ENCODE measurements at regions of chr2 and their contacts with region 1.

Region 1: GRCh38 chr2:120312861-120313694 is 32.9 kb upstream of the INHBB start:
- DNase-seq: peak; percentile 31 to 86
- H3K4me3 ChIP-seq: peak overlapping the region in 3 of 4 experiments; percentile 11 to 51 (median 25); a peak in 4 of 8 replicates
- H3K27ac ChIP-seq: no peak overlapping the region
- H3K4me1 ChIP-seq: peaks cover 1 to 3% (median 2%) of the 10 kb centered on the region in 4 experiments; a peak in 5 of 7 replicates
- H3K27me3 ChIP-seq: peaks cover 4 to 55% (median 40%) of the 10 kb centered on the region in 4 experiments
- CTCF ChIP-seq: peak; percentile 85 to 93 (median 87)
- EP300 ChIP-seq: no peak
- POLR2A ChIP-seq: no peak
- RAD21 ChIP-seq: peak; percentile 85 to 87

Region 2: DNA sequence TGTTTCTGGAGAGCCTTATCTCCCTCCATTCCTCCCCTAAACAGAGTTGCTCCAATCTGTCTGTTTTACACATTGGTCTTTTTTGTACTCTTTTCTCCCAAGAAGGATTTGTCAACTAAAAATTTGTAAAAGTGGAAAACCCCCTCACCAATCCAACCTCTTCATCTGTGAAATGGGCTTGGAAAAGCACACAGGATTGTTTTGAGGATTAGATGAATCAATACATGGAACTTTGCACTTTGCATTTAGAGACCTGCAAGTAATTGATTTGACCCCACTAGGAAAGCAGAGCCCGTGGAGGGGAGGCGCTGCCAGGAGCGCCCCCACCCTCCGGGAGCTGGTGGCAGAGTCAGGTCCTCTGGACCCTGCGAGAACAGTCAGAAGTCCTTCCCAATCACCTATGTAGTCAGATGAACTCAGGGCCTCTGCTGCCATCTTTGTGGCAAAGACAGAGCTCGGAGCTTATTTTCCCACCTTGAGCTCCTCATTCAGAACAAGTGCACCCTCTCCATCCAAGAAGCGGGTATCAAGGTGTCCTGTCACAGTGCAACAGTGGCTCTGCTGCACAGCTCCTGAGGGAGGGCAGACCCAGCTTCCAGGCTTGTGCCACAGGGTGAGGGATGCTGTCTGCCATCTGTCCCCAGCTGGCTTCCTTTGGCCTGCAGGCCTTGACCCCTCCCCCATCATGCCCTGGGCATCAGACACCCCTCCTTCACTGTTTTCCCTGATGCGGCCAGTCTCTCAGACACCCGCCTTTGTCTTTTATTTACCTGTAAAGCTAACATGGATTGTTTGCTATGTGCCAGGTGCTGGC is 88.1 kb before region 1 on chr2:
- CTCF ChIA-PET with region 1: interaction called, 12 read pairs
- POLR2A ChIA-PET with region 1: no interaction called
- DNase-seq: no peak
- H3K4me3 ChIP-seq: no peak overlapping the region
- H3K27ac ChIP-seq: no peak overlapping the region
- H3K4me1 ChIP-seq: peaks cover 0 to 7% (median 6%) of the 10 kb centered on the region in 4 experiments; a peak in 5 of 7 replicates
- H3K27me3 ChIP-seq: peaks cover 13 to 45% (median 29%) of the 10 kb centered on the region in 4 experiments
- CTCF ChIP-seq: no peak
- EP300 ChIP-seq: no peak
- POLR2A ChIP-seq: no peak
- RAD21 ChIP-seq: no peak

Region 3: DNA sequence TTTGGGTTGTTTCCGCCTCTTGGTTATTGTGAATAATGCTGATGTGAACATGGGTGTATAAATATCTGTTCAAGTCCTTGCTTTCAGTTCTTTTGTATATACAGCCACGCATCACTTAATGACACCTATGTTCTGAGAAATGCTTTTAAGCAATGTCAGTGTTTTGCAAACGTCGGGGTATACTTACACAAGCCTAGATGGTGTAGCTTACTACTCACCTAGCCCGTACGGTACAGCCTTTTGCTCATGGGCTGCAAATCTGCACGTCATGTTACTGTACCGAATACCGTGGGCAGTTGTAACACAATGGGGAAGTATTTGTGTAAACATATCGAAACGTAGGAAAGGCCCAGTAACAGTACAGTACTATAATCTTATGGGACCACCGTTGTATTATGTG is 48.1 kb before region 1 on chr2:
- CTCF ChIA-PET with region 1: interaction called, 14 read pairs
- POLR2A ChIA-PET with region 1: no interaction called
- DNase-seq: no peak
- H3K4me3 ChIP-seq: no peak overlapping the region
- H3K27ac ChIP-seq: no peak overlapping the region
- H3K4me1 ChIP-seq: no peaks in the 10 kb centered on the region
- H3K27me3 ChIP-seq: no peaks in the 10 kb centered on the region
- CTCF ChIP-seq: no peak
- EP300 ChIP-seq: no peak
- POLR2A ChIP-seq: no peak
- RAD21 ChIP-seq: no peak

Region 4: DNA sequence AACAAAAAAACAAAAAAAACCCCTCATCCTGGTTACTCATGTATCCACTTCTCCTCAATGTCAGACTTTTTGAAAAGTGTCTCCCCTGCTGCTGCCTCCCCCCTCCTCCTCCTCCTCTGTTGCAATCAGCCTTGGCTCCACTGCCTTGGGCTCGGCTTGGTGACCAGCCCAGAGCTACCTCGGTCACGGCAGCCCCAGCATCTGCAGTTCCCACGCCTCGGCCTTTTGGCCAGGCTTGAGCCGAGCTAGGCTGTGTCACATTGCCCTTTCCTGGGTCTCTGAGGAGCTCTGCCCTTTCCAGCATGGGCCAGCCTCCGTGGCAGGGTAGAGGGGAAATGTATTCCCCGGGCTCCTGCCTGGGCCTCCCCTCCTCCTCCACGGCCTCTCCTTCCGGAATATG is 10.1 kb after region 1 on chr2:
- CTCF ChIA-PET with region 1: interaction called, 48 read pairs
- POLR2A ChIA-PET with region 1: interaction called, 3 read pairs
- DNase-seq: no peak
- H3K4me3 ChIP-seq: no peak overlapping the region
- H3K27ac ChIP-seq: no peak overlapping the region
- H3K4me1 ChIP-seq: no peaks in the 10 kb centered on the region; a peak in 1 of 7 replicates
- H3K27me3 ChIP-seq: peaks cover 0 to 2% (median 0%) of the 10 kb centered on the region in 4 experiments; a peak in 3 of 7 replicates
- CTCF ChIP-seq: no peak
- EP300 ChIP-seq: no peak
- POLR2A ChIP-seq: no peak
- RAD21 ChIP-seq: no peak

Region 5: GRCh38 chr2:120343433-120344105 is 30.5 kb after region 1 on chr2:
- CTCF ChIA-PET with region 1: interaction called, 15 read pairs
- POLR2A ChIA-PET with region 1: no interaction called
- DNase-seq: peak; percentile 71 to 89
- H3K4me3 ChIP-seq: peak overlapping the region in 3 of 4 experiments; percentile 9 to 57 (median 11); a peak in 3 of 8 replicates
- H3K27ac ChIP-seq: no peak overlapping the region
- H3K4me1 ChIP-seq: peaks cover 5 to 28% (median 13%) of the 10 kb centered on the region in 4 experiments
- H3K27me3 ChIP-seq: peaks cover 45 to 76% (median 67%) of the 10 kb centered on the region in 4 experiments
- CTCF ChIP-seq: peak in 2 of 3 experiments; percentile 91 to 97; a peak in 3 of 4 replicates
- EP300 ChIP-seq: 0 out of 3 replicates have a peak, but pooled peaks of 1 of the 2 experiments have one; percentile 27
- POLR2A ChIP-seq: no peak
- RAD21 ChIP-seq: peak; percentile 98 to 99